ENCODE measurements at regions of chr20 and their contacts with region 1.

Region 1: DNA sequence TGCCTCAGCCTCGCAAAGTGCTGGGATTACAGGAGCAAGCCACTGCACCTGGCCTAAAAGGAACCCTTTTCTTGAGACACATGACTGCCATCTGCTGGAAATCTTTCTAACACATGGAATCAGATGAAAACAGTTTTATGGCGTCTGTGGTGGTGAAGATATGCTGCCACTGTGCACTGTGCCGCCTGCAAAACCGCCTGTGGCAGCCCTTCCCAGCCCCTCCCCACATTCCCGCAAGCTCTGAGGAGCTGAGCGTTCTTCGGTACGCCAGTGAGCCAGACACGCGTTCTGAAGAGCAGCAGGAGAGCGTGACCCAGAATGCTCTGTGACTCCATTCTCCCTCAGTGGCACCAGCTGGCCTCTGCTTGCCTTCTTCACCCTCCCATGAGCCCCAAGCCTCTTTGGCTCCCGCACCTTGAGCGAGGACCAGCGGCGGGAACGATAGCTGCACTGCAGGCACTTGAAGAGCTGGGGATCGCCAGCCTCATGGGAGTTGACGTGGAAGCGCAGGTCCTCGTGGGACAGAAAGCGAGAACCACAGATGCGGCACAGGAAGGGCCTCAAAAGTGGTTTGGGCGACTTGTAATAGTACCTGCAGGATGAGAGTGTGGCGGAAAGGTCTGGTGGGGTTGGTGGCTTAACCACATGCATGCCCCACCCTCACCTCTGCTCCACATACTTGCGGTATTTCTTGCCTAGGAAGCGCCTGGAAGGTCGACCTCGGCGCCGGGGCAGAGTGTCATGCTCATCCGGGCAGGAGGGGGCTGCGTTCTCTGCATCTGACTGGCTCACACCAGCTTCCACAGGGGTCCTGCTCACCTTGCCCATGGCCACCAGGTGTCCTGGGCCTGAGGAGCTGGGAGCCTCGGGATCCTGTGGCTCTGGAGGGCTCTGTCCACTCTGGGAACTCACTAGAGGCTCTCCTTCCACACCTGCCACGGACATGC is 8.7 kb downstream of the ZNF335 start:
- DNase-seq: peak; percentile 65
- H3K4me3 ChIP-seq: no peak overlapping the region
- H3K27ac ChIP-seq: no peak overlapping the region
- H3K4me1 ChIP-seq: no peaks in the 10 kb centered on the region
- CTCF ChIP-seq: peak; percentile 55

Region 2: GRCh38 chr20:45798935-45799642 is 164.2 kb before region 1 on chr20:
- CTCF ChIA-PET with region 1: interaction called, 3 read pairs
- POLR2A ChIA-PET with region 1: no interaction called
- intact Hi-C with region 1: loop called (anchors 1 kb)
- DNase-seq: peak; percentile 72
- H3K4me3 ChIP-seq: no peak overlapping the region
- H3K27ac ChIP-seq: no peak overlapping the region
- H3K4me1 ChIP-seq: peaks cover 5% of the 10 kb centered on the region
- CTCF ChIP-seq: peak; percentile 84

Region 3: DNA sequence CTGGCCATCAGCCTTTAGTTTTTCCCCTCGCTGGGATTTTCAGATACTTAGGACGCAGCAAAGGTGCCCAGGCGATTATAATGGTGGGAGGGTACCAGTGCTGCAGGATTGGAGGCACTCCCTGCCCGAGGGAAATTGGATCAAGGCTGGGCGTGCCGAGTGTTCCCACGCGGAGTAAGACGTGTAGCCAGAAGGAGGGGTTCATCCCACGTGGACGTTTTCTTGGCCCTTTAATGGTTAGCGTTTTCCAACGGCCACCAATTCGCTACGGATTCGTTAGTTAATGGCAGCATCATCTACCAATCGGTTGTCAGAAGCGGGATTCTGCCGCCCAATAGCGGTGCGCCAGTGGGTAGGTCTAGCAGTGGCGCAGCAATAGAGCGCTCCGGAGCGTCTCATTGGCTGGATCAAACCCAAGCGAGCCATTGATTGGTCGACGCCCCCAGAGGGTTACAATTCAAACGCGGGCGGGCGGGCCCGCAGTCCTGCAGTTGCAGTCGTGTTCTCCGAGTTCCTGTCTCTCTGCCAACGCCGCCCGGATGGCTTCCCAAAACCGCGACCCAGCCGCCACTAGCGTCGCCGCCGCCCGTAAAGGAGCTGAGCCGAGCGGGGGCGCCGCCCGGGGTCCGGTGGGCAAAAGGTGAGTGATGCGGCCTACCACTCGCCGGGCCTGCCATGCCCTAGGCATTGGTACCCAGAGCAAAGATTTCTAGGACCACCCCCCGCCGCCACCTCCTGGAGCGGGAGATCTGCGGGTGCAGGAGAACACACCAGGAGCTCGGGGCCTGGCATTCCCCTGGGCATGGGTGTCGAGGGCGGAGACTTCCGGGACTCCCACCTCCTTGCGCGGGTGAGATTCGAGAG is 150.9 kb before region 1 on chr20 and contains the start of gene UBE2C:
- CTCF ChIA-PET with region 1: no interaction called
- POLR2A ChIA-PET with region 1: no interaction called
- intact Hi-C with region 1: no loop called
- DNase-seq: peak; percentile 99
- H3K4me3 ChIP-seq: peak within 1 kb of the TSS; percentile 82
- H3K27ac ChIP-seq: peak within 1 kb of the TSS; percentile 79
- H3K4me1 ChIP-seq: peaks cover 19% of the 10 kb centered on the region
- CTCF ChIP-seq: no peak
- total RNA-seq, gene UBE2C: 225 and 269 TPM in 2 replicates

Region 4: GRCh38 chr20:45823949-45824835 is 139.1 kb before region 1 on chr20:
- CTCF ChIA-PET with region 1: no interaction called
- POLR2A ChIA-PET with region 1: interaction called, 3 read pairs
- intact Hi-C with region 1: loop called (anchors 1 kb)
- DNase-seq: peak; percentile 59
- H3K4me3 ChIP-seq: no peak overlapping the region
- H3K27ac ChIP-seq: no peak overlapping the region
- H3K4me1 ChIP-seq: no peaks in the 10 kb centered on the region
- CTCF ChIP-seq: peak; percentile 64

Region 5: GRCh38 chr20:46057856-46058598 is 94.7 kb after region 1 on chr20:
- CTCF ChIA-PET with region 1: no interaction called
- POLR2A ChIA-PET with region 1: no interaction called
- intact Hi-C with region 1: no loop called
- DNase-seq: no peak
- H3K4me3 ChIP-seq: no peak overlapping the region
- H3K27ac ChIP-seq: no peak overlapping the region
- H3K4me1 ChIP-seq: peaks cover 23% of the 10 kb centered on the region
- CTCF ChIP-seq: no peak